ENCODE measurements at regions of chr6 and their contacts with region 1.

Region 1: GRCh38 chr6:111483736-111484632 is 966 bp upstream of the REV3L start:
- DNase-seq: peak; percentile 91 to 95
- ATAC-seq: peak; percentile 81 to 95 (median 89)
- H3K4me3 ChIP-seq: peak overlapping the region; percentile 76 to 95 (median 89)
- H3K27ac ChIP-seq: peak overlapping the region; percentile 95 to 100 (median 99)
- H3K4me1 ChIP-seq: peaks cover 0 to 62% (median 41%) of the 10 kb centered on the region in 9 donors
- H3K27me3 ChIP-seq: no peaks in the 10 kb centered on the region
- CTCF ChIP-seq: no peak

Region 2: DNA sequence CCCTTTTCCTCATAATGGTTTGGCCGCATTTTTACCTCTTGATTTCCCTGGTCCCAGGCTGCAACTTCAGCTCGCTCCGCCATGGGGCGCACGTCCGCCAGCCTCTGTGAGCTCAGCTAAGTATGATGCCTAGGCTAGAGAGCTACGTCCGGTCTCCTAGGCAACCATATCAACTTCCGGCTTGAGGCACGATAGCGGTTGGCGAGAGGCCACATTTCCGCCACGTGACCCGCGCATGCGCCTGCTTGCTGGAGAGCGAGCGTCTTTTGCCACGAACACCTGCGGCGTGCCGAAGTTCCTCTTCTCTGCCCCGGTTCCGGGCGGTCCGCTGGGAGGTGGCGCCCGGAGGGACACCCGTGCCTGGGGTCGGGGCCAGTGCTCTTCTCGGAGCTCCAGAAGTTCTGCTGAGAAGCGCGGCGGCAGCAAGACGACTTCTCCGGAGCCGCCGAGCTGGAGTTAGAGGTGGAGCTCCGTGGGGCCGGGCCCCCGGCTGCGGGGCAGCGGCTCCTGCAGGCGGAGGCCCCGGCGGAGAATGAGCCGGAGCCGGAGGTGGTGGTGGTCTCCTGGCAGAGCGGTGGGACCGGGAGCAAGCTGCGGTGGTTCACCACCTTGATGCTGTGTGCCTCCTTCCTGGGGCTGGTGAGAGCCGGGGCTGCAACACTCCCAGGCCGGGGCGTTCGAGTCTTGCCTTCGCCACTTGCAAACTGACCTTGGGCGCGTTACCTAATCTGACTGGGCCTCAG is 224.7 kb before region 1 on chr6:
- intact Hi-C with region 1: loop called in 3 of 10 experiments (anchors 5 to 10 kb)
- DNase-seq: peak; percentile 99
- ATAC-seq: peak; percentile 98 to 99 (median 99)
- H3K4me3 ChIP-seq: peak overlapping the region; percentile 57 to 96 (median 70)
- H3K27ac ChIP-seq: peak overlapping the region in 9 of 10 donors; percentile 71 to 92 (median 88)
- H3K4me1 ChIP-seq: peaks cover 0 to 27% (median 17%) of the 10 kb centered on the region in 9 donors
- H3K27me3 ChIP-seq: peaks cover 0 to 14% (median 2%) of the 10 kb centered on the region in 7 donors
- CTCF ChIP-seq: peak; percentile 90 to 98 (median 95)

Region 3: DNA sequence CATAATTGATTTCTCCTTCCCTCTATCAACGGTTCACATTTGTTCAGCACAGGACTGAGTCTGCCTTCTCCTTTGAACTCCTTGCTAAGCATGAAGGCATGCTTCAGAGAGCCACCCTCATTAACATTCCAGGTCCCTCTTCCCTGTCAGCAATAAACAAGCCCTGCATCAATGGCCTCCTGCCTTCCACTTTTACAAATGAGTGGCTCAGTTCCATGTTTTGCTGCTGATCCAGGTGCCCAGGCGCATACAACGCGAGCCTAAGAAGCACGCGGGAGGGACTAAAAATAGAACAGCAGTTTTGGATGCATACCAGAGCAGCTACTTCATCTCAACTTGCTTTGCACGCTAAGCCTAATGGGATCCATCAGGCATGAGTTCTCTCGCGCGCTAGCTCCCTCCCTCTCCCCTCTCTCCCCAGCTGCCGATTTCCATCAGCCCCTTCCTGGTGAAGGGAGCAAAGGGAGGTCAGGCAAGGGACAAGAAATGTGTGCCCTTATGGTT is 68.3 kb after region 1 on chr6:
- intact Hi-C with region 1: loop called in 4 of 10 experiments (anchors 1 to 10 kb)
- DNase-seq: peak; percentile 40 to 84
- ATAC-seq: peak; percentile 88 to 96 (median 94)
- H3K4me3 ChIP-seq: peak overlapping the region in 1 of 10 donors; percentile 21
- H3K27ac ChIP-seq: peak overlapping the region in 9 of 10 donors; percentile 22 to 73 (median 67)
- H3K4me1 ChIP-seq: peaks cover 7 to 48% (median 38%) of the 10 kb centered on the region in 9 donors
- H3K27me3 ChIP-seq: no peaks in the 10 kb centered on the region
- CTCF ChIP-seq: no peak

Region 4: DNA sequence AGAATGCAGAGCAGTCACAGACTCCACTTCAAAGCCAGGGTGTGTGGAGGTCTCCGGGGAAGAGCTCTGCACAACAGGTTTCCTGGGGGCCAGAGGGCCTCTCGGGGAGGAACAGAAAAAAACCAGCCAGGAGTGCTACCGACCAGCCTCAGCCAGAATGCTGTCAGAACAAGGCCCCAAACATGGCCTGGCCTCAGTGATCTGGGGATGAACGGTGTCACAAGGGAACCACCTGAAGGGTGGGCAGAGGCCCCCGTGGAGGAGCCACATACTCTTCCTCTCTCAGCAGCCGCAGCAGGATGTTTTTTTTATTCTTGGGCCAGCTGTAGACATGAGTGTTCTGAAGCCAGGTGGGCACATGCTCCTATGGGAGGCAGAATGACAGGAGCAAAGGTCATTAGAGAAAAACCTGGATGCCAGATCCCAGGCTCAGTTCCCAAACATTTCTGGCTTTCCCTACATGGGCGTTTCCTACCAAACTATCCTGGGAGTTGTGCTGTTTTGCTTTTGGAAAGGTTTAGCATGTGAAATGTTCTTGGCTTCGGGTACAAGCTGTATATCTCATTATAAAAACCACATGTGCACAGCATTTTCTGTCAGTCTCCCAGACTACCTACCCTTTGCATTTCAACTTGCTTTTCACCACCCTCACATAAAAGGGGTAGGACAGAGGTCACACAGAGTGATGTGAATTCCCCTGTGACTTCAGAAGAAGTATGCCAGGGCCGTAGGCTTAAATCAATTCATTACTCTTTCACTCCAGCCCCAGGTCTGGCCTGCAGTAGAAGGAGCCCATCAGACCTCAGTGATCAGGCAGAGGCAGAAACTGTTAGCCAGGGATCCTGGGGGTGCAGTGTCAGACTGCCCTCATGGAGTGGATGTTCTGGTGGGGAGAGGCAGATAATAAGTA is 75.5 kb after region 1 on chr6:
- intact Hi-C with region 1: loop called in 6 of 10 experiments (anchors 1 to 10 kb)
- DNase-seq: no peak
- ATAC-seq: peak; percentile 50 to 75 (median 68)
- H3K4me3 ChIP-seq: no peak overlapping the region
- H3K27ac ChIP-seq: peak overlapping the region; percentile 36 to 84 (median 69)
- H3K4me1 ChIP-seq: peaks cover 10 to 60% (median 44%) of the 10 kb centered on the region in 9 donors
- H3K27me3 ChIP-seq: no peaks in the 10 kb centered on the region
- CTCF ChIP-seq: no peak

Region 5: GRCh38 chr6:111565326-111566221 is 81.6 kb after region 1 on chr6:
- intact Hi-C with region 1: loop called in 3 of 10 experiments (anchors 5 to 10 kb)
- DNase-seq: no peak
- ATAC-seq: no peak
- H3K4me3 ChIP-seq: no peak overlapping the region
- H3K27ac ChIP-seq: peak overlapping the region in 9 of 10 donors; percentile 14 to 86 (median 37)
- H3K4me1 ChIP-seq: peaks cover 19 to 70% (median 57%) of the 10 kb centered on the region in 9 donors
- H3K27me3 ChIP-seq: no peaks in the 10 kb centered on the region
- CTCF ChIP-seq: no peak

Region 6: GRCh38 chr6:111605100-111605751 is 121.2 kb after region 1 on chr6:
- intact Hi-C with region 1: loop called in 8 of 10 experiments (anchors 1 to 10 kb)
- DNase-seq: peak; percentile 73 to 79
- ATAC-seq: peak; percentile 53 to 73 (median 67)
- H3K4me3 ChIP-seq: peak overlapping the region; percentile 47 to 74 (median 61)
- H3K27ac ChIP-seq: peak overlapping the region; percentile 89 to 97 (median 94)
- H3K4me1 ChIP-seq: peaks cover 14 to 68% (median 55%) of the 10 kb centered on the region in 9 donors
- H3K27me3 ChIP-seq: no peaks in the 10 kb centered on the region
- CTCF ChIP-seq: no peak

Region 7: DNA sequence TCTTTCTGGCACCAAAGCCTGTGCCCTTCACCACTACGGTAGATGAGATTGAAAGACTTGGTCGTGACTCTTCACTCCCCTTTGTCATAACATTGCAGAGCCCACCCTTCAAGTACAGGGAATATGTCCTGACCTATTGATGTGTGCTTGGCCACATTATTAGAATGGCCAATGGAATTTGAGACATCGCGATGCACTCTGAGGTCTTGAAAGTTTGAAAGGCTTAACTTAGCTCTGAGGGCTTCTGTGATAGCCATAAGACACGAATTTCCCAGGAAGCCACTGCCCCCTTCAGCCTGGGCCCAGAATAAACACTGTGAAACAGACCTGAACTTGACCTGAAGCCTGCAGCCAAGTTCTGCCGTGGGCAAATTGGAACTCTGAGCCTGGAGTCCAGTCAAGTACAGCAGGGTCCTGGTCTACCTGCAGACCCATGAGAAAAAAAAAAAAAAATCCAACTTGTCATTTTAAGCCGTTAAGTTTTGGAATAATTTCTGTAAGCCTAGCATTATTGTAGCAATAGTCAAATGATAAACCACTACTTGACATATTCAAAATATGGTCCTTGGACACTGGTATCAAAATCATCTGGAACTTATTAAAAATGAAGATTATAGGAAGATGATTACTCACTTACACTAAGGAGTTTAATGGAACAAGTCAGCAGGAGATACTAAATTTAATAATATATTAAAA is 158.6 kb after region 1 on chr6:
- intact Hi-C with region 1: loop called in 4 of 10 experiments (anchors 1 to 10 kb)
- DNase-seq: peak; percentile 52 to 78
- ATAC-seq: peak; percentile 83 to 95 (median 92)
- H3K4me3 ChIP-seq: no peak overlapping the region
- H3K27ac ChIP-seq: no peak overlapping the region
- H3K4me1 ChIP-seq: peaks cover 0 to 14% (median 0%) of the 10 kb centered on the region in 9 donors
- H3K27me3 ChIP-seq: no peaks in the 10 kb centered on the region
- CTCF ChIP-seq: peak; percentile 43 to 81 (median 64)

Measured in heart right ventricle (tissue), 16 donors.